B cell (primary cell): ENCODE measurements at regions of chr12 and their contacts with region 1.

Region 1: DNA sequence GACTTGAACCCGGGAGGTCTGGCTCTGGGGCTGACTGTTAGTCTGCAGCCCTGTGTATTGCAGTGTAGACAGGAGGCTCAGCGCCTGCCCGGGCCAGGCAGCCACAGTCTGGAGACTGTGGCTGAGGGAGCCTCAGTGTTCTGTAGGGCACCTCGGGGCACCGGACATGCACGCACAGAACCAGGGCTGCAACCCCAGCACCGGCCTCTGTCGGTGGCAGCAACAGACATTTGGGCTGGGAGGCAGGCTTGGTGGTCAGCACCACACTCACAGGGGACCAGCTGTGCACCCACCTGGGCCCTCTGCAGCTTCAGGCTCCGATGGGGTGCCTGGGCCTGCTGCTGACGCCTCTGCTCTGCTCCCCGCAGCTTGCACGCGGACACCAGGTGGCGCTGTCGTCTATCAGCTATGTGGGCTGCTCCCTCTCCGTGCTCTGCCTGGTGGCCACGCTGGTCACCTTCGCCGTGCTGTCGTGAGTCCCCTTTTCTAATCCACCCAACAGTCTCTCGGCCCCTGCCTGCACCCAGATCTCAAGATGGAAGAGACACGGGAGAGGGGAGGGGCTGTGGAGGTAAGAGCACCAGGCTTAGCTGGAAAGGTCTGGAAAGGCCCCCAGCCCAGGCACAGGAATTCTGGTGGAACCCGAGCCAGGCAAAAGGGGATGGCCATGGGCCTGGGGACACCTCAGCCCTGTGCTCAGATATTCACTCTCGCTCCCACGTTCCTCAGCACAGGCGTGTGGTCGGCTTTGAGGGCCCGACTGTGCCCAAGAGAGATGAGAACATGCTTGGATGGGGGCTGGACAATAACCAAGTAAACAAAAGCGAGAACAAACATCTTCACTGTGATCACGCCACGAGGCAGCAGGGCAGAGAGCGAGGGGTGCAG is 151.0 kb downstream of the ADGRD1 start:
- DNase-seq: peak; percentile 78
- ATAC-seq: peak; percentile 77
- H3K4me3 ChIP-seq: no peak overlapping the region
- H3K4me3 Mint-ChIP-seq: no peak overlapping the region
- H3K27ac ChIP-seq: no peak overlapping the region
- H3K27ac Mint-ChIP-seq: no peak overlapping the region
- H3K4me1 ChIP-seq: peaks cover 14 to 47% of the 10 kb centered on the region in 2 donors
- H3K4me1 Mint-ChIP-seq: peaks cover 17% of the 10 kb centered on the region
- H3K27me3 ChIP-seq: no peaks in the 10 kb centered on the region
- H3K27me3 Mint-ChIP-seq: peaks cover 4% of the 10 kb centered on the region
- CTCF ChIP-seq: peak; percentile 87

Region 2: GRCh38 chr12:131061041-131061806 is 43.5 kb before region 1 on chr12:
- CTCF ChIA-PET with region 1: no interaction called
- POLR2A ChIA-PET with region 1: no interaction called
- intact Hi-C with region 1: no loop called
- DNase-seq: peak; percentile 28
- ATAC-seq: peak; percentile 33
- H3K4me3 ChIP-seq: no peak overlapping the region
- H3K4me3 Mint-ChIP-seq: no peak overlapping the region
- H3K27ac ChIP-seq: no peak overlapping the region
- H3K27ac Mint-ChIP-seq: no peak overlapping the region
- H3K4me1 ChIP-seq: peaks cover 0 to 3% of the 10 kb centered on the region in 2 donors
- H3K4me1 Mint-ChIP-seq: no peaks in the 10 kb centered on the region
- H3K27me3 ChIP-seq: peaks cover 0 to 7% (median 1%) of the 10 kb centered on the region in 4 experiments
- H3K27me3 Mint-ChIP-seq: peaks cover 29% of the 10 kb centered on the region
- CTCF ChIP-seq: no peak

Region 3: GRCh38 chr12:131116391-131117117 is 11.8 kb after region 1 on chr12:
- CTCF ChIA-PET with region 1: interaction called, 27 read pairs
- POLR2A ChIA-PET with region 1: no interaction called
- intact Hi-C with region 1: no loop called
- DNase-seq: no peak
- ATAC-seq: no peak
- H3K4me3 ChIP-seq: no peak overlapping the region
- H3K4me3 Mint-ChIP-seq: no peak overlapping the region
- H3K27ac ChIP-seq: no peak overlapping the region
- H3K27ac Mint-ChIP-seq: no peak overlapping the region
- H3K4me1 ChIP-seq: no peaks in the 10 kb centered on the region
- H3K4me1 Mint-ChIP-seq: no peaks in the 10 kb centered on the region
- H3K27me3 ChIP-seq: peaks cover 0 to 5% (median 0%) of the 10 kb centered on the region in 4 experiments
- H3K27me3 Mint-ChIP-seq: peaks cover 21% of the 10 kb centered on the region
- CTCF ChIP-seq: no peak

Region 4: GRCh38 chr12:131482199-131482598 is 377.5 kb after region 1 on chr12:
- CTCF ChIA-PET with region 1: no interaction called
- POLR2A ChIA-PET with region 1: no interaction called
- intact Hi-C with region 1: no loop called
- DNase-seq: no peak
- ATAC-seq: no peak
- H3K4me3 ChIP-seq: no peak overlapping the region
- H3K4me3 Mint-ChIP-seq: no peak overlapping the region
- H3K27ac ChIP-seq: no peak overlapping the region
- H3K27ac Mint-ChIP-seq: no peak overlapping the region
- H3K4me1 ChIP-seq: no peaks in the 10 kb centered on the region
- H3K4me1 Mint-ChIP-seq: no peaks in the 10 kb centered on the region
- H3K27me3 ChIP-seq: no peaks in the 10 kb centered on the region
- H3K27me3 Mint-ChIP-seq: peaks cover 14% of the 10 kb centered on the region
- CTCF ChIP-seq: no peak